HEK293 (cell line): ENCODE measurements at regions of chr16 and their contacts with region 1.

Region 1: DNA sequence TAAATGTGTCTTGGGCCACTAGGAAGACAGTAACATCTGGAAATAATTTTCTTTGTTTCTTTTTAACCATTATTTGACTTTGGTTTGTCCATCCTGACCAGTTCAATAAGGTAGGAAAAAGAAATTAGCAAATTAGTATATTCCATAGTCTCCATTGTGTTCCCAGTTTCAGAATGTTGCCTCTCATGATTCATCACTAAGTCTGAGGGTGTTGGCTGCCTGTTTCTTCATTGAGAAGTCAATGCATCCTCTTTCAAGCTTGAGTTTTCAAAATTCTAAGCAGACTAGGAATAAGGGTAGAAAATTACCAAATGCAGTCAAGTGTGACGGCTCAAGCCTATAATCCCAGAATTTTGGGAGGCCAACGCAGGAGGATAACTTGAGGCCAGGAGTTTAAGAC is 41.9 kb downstream of the ZFHX3 start:
- H3K4me3 ChIP-seq: no peak overlapping the region
- H3K27ac ChIP-seq: no peak overlapping the region
- H3K4me1 ChIP-seq: peaks cover 2% of the 10 kb centered on the region; the same call in 1 of the 2 replicates
- CTCF ChIP-seq: no peak

Region 2: GRCh38 chr16:72995151-72995881 is 10.7 kb before region 1 on chr16:
- CTCF ChIA-PET with region 1: interaction called, 17 read pairs
- POLR2A ChIA-PET with region 1: interaction called, 3 read pairs
- H3K4me3 ChIP-seq: no peak overlapping the region
- H3K27ac ChIP-seq: no peak overlapping the region
- H3K4me1 ChIP-seq: peaks cover 6% of the 10 kb centered on the region
- CTCF ChIP-seq: no peak